ENCODE measurements at regions of chr11 and their contacts with region 1.

Region 1: GRCh38 chr11:91163619-91164451 is 941.0 kb upstream of the CHORDC1 start:
- DNase-seq: no peak
- ATAC-seq: peak; percentile 26 to 90 (median 66)
- H3K4me3 ChIP-seq: no peak overlapping the region
- H3K27ac ChIP-seq: peak overlapping the region in 1 of 12 donors; percentile 33
- H3K4me1 ChIP-seq: peaks cover 0 to 8% (median 0%) of the 10 kb centered on the region in 12 donors
- H3K27me3 ChIP-seq: no peaks in the 10 kb centered on the region
- CTCF ChIP-seq: no peak
- POLR2A ChIP-seq: no peak

Region 2: GRCh38 chr11:91220476-91221202 is 56.8 kb after region 1 on chr11:
- intact Hi-C with region 1: no loop called
- DNase-seq: no peak
- ATAC-seq: peak in 2 of 4 donors; percentile 31 to 68
- H3K4me3 ChIP-seq: no peak overlapping the region
- H3K27ac ChIP-seq: peak overlapping the region in 6 of 12 donors; percentile 27 to 65 (median 60)
- H3K4me1 ChIP-seq: peaks cover 0 to 21% (median 5%) of the 10 kb centered on the region in 12 donors
- H3K27me3 ChIP-seq: no peaks in the 10 kb centered on the region
- CTCF ChIP-seq: no peak
- POLR2A ChIP-seq: no peak

Region 3: GRCh38 chr11:91231201-91231600 is 67.4 kb after region 1 on chr11:
- intact Hi-C with region 1: loop called in 1 of 10 experiments (anchors 5 kb)
- DNase-seq: peak in 2 of 5 donors; percentile 24 to 32
- ATAC-seq: peak; percentile 76 to 87 (median 82)
- H3K4me3 ChIP-seq: no peak overlapping the region
- H3K27ac ChIP-seq: peak overlapping the region in 8 of 12 donors; percentile 2 to 82 (median 36)
- H3K4me1 ChIP-seq: peaks cover 0 to 15% (median 4%) of the 10 kb centered on the region in 12 donors
- H3K27me3 ChIP-seq: no peaks in the 10 kb centered on the region
- CTCF ChIP-seq: no peak
- POLR2A ChIP-seq: no peak